H1 (cell line): ENCODE measurements at regions of chr1 and their contacts with region 1.

Region 1: DNA sequence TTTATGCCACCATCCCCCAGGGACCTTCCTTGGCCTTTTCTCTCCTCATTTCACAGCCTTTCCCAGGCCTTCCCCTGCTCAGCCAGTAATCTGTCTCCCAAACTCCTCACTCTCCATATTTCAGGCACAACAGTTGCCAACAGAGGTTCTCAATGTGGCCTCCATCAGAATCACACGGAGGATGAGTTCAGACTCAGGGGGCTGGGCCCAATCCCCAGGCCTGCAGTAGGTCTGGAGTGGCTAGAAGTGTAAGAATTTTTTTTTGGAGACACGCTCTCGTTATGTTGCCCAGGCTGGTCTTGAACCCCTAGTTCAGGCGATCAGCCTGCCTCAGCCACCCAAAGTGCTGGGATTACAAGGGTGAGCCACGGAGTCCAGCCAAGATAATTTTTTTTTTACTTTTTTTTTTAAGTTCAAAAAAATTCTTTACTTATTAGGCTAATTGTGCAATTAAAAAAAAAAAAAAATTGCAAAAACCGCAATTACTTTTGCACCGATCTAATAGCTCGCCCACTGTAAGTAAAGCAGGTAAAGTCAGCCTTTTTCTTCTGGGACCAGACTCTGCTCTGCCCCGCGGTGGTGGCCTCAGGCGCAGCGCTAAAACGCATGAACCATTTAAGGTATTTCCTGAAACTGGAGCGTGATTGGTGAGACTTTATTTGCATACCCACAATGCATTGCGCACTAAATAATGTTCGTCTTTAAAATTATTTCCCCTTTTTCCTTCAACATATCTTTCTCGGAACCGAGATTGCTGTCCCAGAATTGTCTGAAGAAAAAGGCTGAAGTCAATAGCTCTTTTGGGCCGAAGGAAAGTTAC is 18.7 kb downstream of the KIAA2013 start:
- DNase-seq: peak; percentile 96
- H3K4me3 ChIP-seq: peak overlapping the region in 2 of 4 experiments; percentile 25 to 61; a peak in 2 of 8 replicates
- H3K27ac ChIP-seq: peak overlapping the region; percentile 100
- H3K4me1 ChIP-seq: peaks cover 0 to 4% (median 1%) of the 10 kb centered on the region in 4 experiments; a peak in 3 of 7 replicates
- H3K27me3 ChIP-seq: no peaks in the 10 kb centered on the region
- CTCF ChIP-seq: peak; percentile 74 to 89 (median 75)
- EP300 ChIP-seq: no peak
- POLR2A ChIP-seq: no peak
- RAD21 ChIP-seq: peak; percentile 63 to 64

Region 2: GRCh38 chr1:11681071-11681771 is 226.3 kb before region 1 on chr1 and contains the start of gene MAD2L2:
- CTCF ChIA-PET with region 1: no interaction called
- POLR2A ChIA-PET with region 1: interaction called, 23 read pairs
- DNase-seq: peak in 1 of 2 experiments; percentile 94
- H3K4me3 ChIP-seq: peak within 1 kb of the TSS; percentile 78 to 87 (median 84)
- H3K27ac ChIP-seq: peak within 1 kb of the TSS; percentile 93
- H3K4me1 ChIP-seq: peaks cover 13 to 38% (median 26%) of the 10 kb centered on the region in 4 experiments
- H3K27me3 ChIP-seq: no peaks in the 10 kb centered on the region
- CTCF ChIP-seq: no peak
- EP300 ChIP-seq: peak in 1 of 2 experiments; percentile 69; a peak in 1 of 3 replicates
- POLR2A ChIP-seq: peak in 1 of 2 experiments; percentile 17; a peak in 1 of 3 replicates
- RAD21 ChIP-seq: no peak
- total RNA-seq, gene MAD2L2: 310 and 314 TPM in 2 replicates

Region 3: DNA sequence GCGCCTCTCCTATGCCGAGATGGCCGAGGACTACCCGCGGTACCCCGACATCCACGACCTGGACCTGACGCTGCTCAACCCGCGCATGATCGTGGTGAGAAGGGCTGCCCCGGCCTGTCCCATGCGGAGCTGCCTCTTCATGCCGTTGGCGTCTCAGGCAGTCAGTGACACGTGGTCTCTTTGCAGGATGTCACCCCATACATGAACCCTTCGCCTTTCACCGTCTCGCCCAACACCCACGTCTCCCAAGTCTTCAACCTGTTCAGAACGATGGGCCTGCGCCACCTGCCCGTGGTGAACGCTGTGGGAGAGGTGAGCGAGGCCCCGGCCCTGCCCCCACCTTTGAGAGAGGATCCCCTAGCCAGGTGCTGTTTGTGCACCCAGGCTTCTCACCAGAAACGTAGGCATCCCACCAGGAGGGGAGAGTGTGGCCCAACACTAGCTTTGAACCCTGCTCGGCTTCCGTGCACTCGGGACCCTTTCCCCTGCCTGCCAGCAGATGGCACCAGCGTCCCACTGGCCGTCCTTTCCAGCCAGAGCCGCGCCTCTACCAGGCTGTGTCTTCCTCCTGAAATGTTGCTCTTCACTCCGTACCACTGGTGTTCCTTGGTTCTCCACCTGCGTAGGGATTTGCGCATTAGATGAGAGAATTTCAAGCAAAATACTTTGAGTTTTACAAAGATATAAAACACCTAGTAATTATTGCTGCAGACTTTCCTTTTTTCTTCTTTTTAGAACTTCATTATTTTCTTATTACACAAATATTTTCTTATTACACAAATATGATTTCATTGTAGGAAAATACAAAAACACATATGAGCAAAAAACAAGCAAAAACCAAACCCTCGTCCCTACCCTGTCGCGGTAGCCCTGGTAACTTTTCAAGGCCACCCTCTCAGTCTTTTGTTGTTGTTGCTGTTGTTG is 68.9 kb before region 1 on chr1:
- CTCF ChIA-PET with region 1: interaction called, 11 read pairs
- POLR2A ChIA-PET with region 1: interaction called, 72 read pairs
- DNase-seq: peak; percentile 33 to 91
- H3K4me3 ChIP-seq: no peak overlapping the region
- H3K27ac ChIP-seq: no peak overlapping the region
- H3K4me1 ChIP-seq: no peaks in the 10 kb centered on the region
- H3K27me3 ChIP-seq: no peaks in the 10 kb centered on the region
- CTCF ChIP-seq: peak; percentile 96 to 100 (median 99)
- EP300 ChIP-seq: no peak
- POLR2A ChIP-seq: no peak
- RAD21 ChIP-seq: peak; percentile 98

Region 4: DNA sequence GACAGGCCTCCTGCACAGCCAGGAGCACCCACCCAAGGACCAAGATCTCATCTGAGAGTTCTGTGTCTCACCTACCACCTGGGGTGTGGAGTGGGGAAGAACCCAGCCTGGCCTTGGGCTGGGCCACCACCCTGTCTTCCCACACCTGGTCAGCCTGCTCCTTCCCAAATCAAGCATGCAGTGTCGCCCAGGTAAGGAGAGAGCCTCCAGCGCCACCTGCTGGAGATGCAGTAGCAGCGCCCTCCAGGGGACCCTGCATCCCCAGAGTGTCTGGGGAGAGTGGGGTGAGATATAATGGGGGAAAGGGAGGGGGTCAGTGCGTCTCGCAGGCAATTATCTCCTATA is 13.6 kb before region 1 on chr1:
- CTCF ChIA-PET with region 1: interaction called, 6 read pairs
- POLR2A ChIA-PET with region 1: interaction called, 46 read pairs
- DNase-seq: peak in 1 of 2 experiments; percentile 93
- H3K4me3 ChIP-seq: no peak overlapping the region
- H3K27ac ChIP-seq: no peak overlapping the region
- H3K4me1 ChIP-seq: no peaks in the 10 kb centered on the region; a peak in 3 of 7 replicates
- H3K27me3 ChIP-seq: no peaks in the 10 kb centered on the region
- CTCF ChIP-seq: peak; percentile 97 to 98 (median 98)
- EP300 ChIP-seq: no peak
- POLR2A ChIP-seq: no peak
- RAD21 ChIP-seq: peak; percentile 91 to 96

Region 5: DNA sequence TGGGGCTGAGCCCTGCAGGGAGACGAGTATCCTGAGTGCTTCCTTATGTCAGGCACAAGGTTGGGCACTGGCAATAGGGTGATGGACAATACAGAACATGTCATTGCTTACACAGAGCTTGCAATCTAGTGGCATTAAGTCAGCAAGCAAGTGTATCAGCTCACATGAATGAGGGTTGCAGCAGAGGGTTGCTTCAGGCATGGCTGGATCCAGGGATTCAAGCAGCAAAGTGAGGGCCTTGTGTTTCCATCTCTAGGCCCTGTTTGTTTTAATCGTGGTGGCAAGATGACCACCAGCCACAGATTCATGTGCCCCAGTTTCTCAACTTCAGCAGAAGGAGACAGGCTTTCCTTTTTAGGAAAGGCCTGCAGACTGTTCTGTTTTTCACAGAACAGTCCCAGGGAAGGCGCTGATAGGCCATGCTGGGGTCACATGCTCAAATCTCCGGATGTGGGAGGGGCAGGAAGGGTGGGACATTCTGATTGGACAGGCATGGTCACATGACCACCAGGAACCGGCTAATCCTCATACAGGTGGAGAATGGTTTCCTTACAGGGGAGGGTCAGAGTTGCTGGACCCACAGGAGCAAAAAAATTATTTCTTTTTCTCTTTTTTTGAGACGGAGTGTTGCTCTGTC is 41.5 kb after region 1 on chr1:
- CTCF ChIA-PET with region 1: no interaction called
- POLR2A ChIA-PET with region 1: interaction called, 45 read pairs
- DNase-seq: no peak
- H3K4me3 ChIP-seq: no peak overlapping the region
- H3K27ac ChIP-seq: no peak overlapping the region
- H3K4me1 ChIP-seq: peaks cover under 1 to 9% (median 3%) of the 10 kb centered on the region in 4 experiments; a peak in 6 of 7 replicates
- H3K27me3 ChIP-seq: no peaks in the 10 kb centered on the region
- CTCF ChIP-seq: no peak
- EP300 ChIP-seq: no peak
- POLR2A ChIP-seq: no peak
- RAD21 ChIP-seq: no peak

Region 6: DNA sequence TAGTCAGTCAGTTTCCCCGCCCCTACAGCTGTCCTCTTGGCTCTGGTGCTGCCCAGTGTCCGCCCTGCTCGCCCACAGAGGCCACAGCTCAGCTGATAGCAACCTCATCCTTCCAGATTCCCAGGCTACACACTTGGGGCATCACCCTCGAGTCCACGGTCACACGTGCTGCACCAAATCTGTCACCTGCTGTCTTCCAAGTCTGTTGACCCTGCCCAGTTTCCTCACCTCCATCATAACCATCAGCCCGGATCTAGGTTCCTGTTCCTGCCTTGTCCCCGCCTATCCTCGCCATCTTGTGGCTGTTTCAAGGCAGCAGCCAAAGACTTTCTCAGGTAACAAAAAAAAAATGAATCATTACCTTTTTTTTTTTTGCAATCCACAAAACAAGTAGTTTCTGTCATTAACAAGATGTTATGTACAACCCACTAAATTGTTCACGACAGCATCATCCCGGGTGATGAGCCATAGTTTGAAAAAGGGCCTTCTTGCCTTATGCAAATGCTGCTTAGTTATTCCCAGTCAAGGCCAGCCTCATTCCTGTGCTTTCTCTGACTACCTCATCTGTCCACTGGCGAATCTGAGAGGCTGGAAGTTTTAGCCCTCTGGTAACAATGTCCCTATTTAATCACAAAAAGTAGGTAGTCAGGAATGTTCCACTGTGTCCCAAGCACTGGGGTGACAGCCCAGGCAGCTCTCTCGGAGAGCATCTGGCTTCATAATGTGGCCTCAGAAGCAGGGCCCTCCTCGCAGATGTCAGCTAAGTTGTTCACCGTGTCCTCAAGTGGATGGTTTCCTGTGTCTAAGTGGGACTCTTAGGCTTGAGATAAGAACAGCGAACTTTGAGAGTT is 106.9 kb after region 1 on chr1:
- CTCF ChIA-PET with region 1: interaction called, 4 read pairs
- POLR2A ChIA-PET with region 1: interaction called, 36 read pairs
- DNase-seq: no peak
- H3K4me3 ChIP-seq: no peak overlapping the region
- H3K27ac ChIP-seq: 0 out of 2 replicates have a peak overlapping the region, but pooled peaks have one; percentile 7
- H3K4me1 ChIP-seq: no peaks in the 10 kb centered on the region
- H3K27me3 ChIP-seq: no peaks in the 10 kb centered on the region
- CTCF ChIP-seq: peak; percentile 38 to 45 (median 44)
- EP300 ChIP-seq: no peak
- POLR2A ChIP-seq: no peak
- RAD21 ChIP-seq: peak in 1 of 2 experiments; percentile 45; a peak in 2 of 4 replicates